Calu3 (cell line): ENCODE measurements at regions of chr5 and their contacts with region 1.

Region 1: GRCh38 chr5:100148239-100148638 is 386.9 kb upstream of the FAM174A start:
- DNase-seq: no peak
- H3K4me3 Mint-ChIP-seq: no peak overlapping the region
- H3K27ac Mint-ChIP-seq: no peak overlapping the region
- H3K4me1 Mint-ChIP-seq: no peaks in the 10 kb centered on the region
- H3K27me3 Mint-ChIP-seq: no peaks in the 10 kb centered on the region
- CTCF ChIP-seq: no peak

Region 2: GRCh38 chr5:100213483-100213882 is 65.2 kb after region 1 on chr5:
- CTCF ChIA-PET with region 1: no interaction called
- intact Hi-C with region 1: loop called (anchors 10 kb)
- DNase-seq: no peak
- H3K4me3 Mint-ChIP-seq: no peak overlapping the region
- H3K27ac Mint-ChIP-seq: no peak overlapping the region
- H3K4me1 Mint-ChIP-seq: no peaks in the 10 kb centered on the region
- H3K27me3 Mint-ChIP-seq: no peaks in the 10 kb centered on the region
- CTCF ChIP-seq: no peak

Region 3: GRCh38 chr5:100546001-100546400 is 397.8 kb after region 1 on chr5:
- CTCF ChIA-PET with region 1: no interaction called
- intact Hi-C with region 1: no loop called
- DNase-seq: no peak
- H3K4me3 Mint-ChIP-seq: no peak overlapping the region
- H3K27ac Mint-ChIP-seq: no peak overlapping the region
- H3K4me1 Mint-ChIP-seq: no peaks in the 10 kb centered on the region
- H3K27me3 Mint-ChIP-seq: no peaks in the 10 kb centered on the region
- CTCF ChIP-seq: no peak

Region 4: GRCh38 chr5:100762108-100762507 is 613.9 kb after region 1 on chr5:
- CTCF ChIA-PET with region 1: no interaction called
- intact Hi-C with region 1: no loop called
- DNase-seq: no peak
- H3K4me3 Mint-ChIP-seq: no peak overlapping the region
- H3K27ac Mint-ChIP-seq: no peak overlapping the region
- H3K4me1 Mint-ChIP-seq: peaks cover 15% of the 10 kb centered on the region
- H3K27me3 Mint-ChIP-seq: no peaks in the 10 kb centered on the region
- CTCF ChIP-seq: no peak